Activated T-helper 2 cell treated with anti-CD3 and anti-CD28 coated beads, Interferon-gamma antibody, Interleukin-2, Interleukin-4, amounts not matched to agents 10 μg/mL and 5 μg/mL and 100 μg/mL, durations not matched to agents 14 hours and 24 hours and 36 hours (primary cell): ENCODE measurements at regions of chr16 and their contacts with region 1.

Region 1: GRCh38 chr16:47016700-47017133 is 43.2 kb upstream of the DNAJA2 start:
- DNase-seq: no peak
- H3K4me3 Mint-ChIP-seq: no peak overlapping the region
- H3K27ac Mint-ChIP-seq: no peak overlapping the region
- H3K4me1 Mint-ChIP-seq: peaks cover 12% of the 10 kb centered on the region
- H3K27me3 Mint-ChIP-seq: no peaks in the 10 kb centered on the region

Region 2: GRCh38 chr16:46947900-46948547 is 68.7 kb before region 1 on chr16:
- intact Hi-C with region 1: loop called (anchors 2 kb)
- DNase-seq: no peak
- H3K4me3 Mint-ChIP-seq: no peak overlapping the region
- H3K27ac Mint-ChIP-seq: no peak overlapping the region
- H3K4me1 Mint-ChIP-seq: peaks cover 9% of the 10 kb centered on the region
- H3K27me3 Mint-ChIP-seq: no peaks in the 10 kb centered on the region

Region 3: DNA sequence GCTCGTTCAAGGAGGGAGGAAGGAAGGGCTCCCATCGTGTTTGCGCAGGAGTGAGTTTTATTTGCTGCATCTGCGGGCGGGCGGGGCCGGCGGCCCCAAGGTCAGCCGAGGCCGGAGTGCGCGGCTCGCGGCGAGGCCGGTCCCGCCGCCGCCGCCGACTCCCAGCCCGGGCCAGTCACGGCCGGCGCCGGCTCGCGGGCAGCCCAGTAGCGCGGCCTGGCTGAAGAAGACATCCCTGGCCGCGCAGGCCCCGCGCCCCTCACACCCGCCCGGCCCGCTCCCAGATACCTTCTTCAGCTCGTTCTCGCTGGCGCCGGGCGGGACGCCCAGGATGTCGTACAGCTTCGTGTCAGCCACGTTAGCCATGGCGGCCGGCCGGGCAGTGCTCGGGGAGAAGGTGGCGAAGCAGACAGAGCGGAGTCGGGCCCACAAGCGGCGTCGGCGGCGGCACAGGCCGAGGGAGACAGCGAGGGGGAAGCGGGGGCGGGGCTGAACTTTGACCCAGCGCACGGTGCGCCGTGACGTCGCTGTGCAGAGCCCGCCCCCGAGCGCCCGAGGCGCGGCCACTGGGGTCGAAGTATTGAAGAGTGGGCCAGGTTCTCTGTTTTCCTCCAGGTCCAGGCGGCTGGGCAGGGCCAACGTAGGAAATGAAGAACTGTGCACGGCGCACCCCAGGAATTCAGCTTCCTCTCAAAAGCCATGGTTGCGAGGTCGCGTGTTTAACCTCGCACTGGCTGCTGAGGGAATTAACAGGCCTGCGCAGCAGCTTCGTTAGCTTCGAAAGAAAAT is 43.3 kb before region 1 on chr16 and contains the start of gene DNAJA2:
- intact Hi-C with region 1: loop called (anchors 2 kb)
- DNase-seq: peak; percentile 87
- H3K4me3 Mint-ChIP-seq: peak within 1 kb of the TSS; percentile 98
- H3K27ac Mint-ChIP-seq: peak within 1 kb of the TSS; percentile 96
- H3K4me1 Mint-ChIP-seq: peaks cover 45% of the 10 kb centered on the region
- H3K27me3 Mint-ChIP-seq: no peaks in the 10 kb centered on the region
- total RNA-seq, gene DNAJA2: 65.9 and 74.4 TPM in 2 replicates